Activated CD4-positive, alpha-beta T cell treated with anti-CD3 and anti-CD28 coated beads, Interleukin-2, amount 10 ng/mL, durations not matched to agents 7 days and 5 days (primary cell): ENCODE measurements at regions of chr12 and their contacts with region 1.

Region 1: GRCh38 chr12:110312581-110313360 is 31.7 kb downstream of the ATP2A2 start:
- DNase-seq: no peak
- H3K4me3 Mint-ChIP-seq: no peak overlapping the region
- H3K27ac Mint-ChIP-seq: peak overlapping the region; percentile 74
- H3K4me1 Mint-ChIP-seq: peaks cover 52% of the 10 kb centered on the region
- H3K27me3 Mint-ChIP-seq: no peaks in the 10 kb centered on the region

Region 2: DNA sequence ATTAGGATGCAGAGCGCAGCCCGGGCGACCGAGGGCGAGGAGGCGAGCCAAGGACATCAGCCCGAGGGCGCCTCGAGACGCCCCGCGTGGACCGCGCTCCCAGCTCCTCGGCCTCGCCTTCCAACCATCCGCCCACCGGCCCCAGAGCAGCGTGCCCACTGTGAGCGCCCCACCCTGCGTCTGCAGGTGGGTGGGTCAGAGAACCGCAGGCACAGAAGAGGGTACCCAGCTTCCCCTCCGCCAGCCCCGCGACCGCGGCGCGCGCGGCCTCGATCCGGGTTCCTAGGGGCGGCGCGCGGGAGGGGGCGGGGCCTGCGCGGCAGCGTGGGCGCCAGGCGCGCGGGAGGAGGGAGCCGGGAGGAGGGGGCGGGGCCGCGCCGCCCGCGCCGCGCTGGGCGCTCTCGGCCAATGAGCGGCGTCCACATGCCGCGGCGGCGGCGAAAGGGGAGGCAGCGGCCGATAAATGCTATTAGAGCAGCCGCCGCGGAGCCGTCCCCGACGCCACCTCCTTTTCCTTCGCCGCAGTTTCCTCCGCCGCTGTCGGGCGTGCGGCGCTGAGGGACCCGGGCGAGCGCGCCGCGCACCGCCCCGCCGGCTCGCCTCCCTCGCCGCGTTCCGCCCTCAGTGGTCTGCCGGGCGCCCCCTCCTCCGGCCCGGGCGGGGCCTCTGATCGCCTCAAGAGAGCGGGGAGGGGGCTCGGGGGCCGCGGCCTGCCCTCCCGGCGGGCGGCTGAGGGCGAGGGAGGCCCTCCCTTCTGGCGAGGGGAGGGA is 31.8 kb before region 1 on chr12 and contains the start of gene ATP2A2:
- CTCF ChIA-PET with region 1: no interaction called
- POLR2A ChIA-PET with region 1: no interaction called
- DNase-seq: peak; percentile 90
- H3K4me3 Mint-ChIP-seq: peak within 1 kb of the TSS; percentile 88
- H3K27ac Mint-ChIP-seq: peak within 1 kb of the TSS; percentile 93
- H3K4me1 Mint-ChIP-seq: peaks cover 51% of the 10 kb centered on the region
- H3K27me3 Mint-ChIP-seq: peaks cover 6% of the 10 kb centered on the region
- total RNA-seq, gene ATP2A2: 126 to 131 TPM

Region 3: GRCh38 chr12:110355073-110355472 is 42.3 kb after region 1 on chr12:
- CTCF ChIA-PET with region 1: interaction called, 10 read pairs
- POLR2A ChIA-PET with region 1: no interaction called
- DNase-seq: peak; percentile 42
- H3K4me3 Mint-ChIP-seq: no peak overlapping the region
- H3K27ac Mint-ChIP-seq: no peak overlapping the region
- H3K4me1 Mint-ChIP-seq: peaks cover 26% of the 10 kb centered on the region
- H3K27me3 Mint-ChIP-seq: no peaks in the 10 kb centered on the region

Region 4: DNA sequence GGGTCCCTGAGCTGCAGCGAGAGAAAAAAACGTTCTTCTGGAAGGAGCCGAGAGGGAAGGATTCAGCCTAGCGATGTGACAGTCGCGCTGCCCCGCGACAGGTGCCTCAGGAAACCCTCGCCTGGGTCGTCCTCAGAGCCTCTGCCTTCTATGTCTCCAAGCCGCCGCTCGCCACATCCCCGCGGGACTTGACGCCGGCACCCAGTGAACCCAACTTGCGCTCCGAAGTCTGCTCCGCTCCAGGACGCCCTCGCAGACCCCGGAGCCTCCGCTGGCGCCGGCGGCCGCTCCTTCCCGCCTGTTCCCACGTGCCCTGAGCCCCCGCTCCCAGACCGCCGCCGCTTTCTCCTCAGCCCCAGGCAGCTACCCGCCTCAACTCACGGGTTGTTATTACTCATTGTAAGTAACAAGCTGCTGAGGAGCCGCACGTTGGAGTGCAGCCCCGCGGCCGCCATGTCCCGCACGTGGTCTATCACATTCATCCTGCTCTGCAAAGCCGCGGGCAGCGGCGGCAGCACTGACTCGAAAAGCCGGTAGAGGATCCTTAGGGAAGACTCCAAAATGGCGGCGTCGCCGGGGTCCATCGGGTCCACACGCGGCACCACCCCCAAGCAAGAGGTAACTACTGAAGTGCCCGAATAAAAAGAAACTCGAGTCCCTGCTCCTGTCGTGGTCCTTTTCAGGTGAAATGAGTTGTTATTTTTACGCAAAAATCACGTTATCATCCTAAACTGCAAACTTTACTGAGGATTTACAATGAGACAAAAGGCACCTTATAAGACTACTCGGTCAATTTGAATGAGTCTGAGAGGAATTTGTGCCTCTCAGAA is 90.6 kb after region 1 on chr12 and contains the start of gene ANAPC7:
- CTCF ChIA-PET with region 1: no interaction called
- POLR2A ChIA-PET with region 1: interaction called, 11 read pairs
- DNase-seq: peak; percentile 88
- H3K4me3 Mint-ChIP-seq: peak within 1 kb of the TSS; percentile 100
- H3K27ac Mint-ChIP-seq: peak within 1 kb of the TSS; percentile 100
- H3K4me1 Mint-ChIP-seq: peaks cover 37% of the 10 kb centered on the region
- H3K27me3 Mint-ChIP-seq: no peaks in the 10 kb centered on the region
- total RNA-seq, gene ANAPC7: 61.8 to 67.7 TPM

Region 5: GRCh38 chr12:110475426-110475825 is 162.7 kb after region 1 on chr12:
- CTCF ChIA-PET with region 1: no interaction called
- POLR2A ChIA-PET with region 1: no interaction called
- DNase-seq: no peak
- H3K4me3 Mint-ChIP-seq: no peak overlapping the region
- H3K27ac Mint-ChIP-seq: no peak overlapping the region
- H3K4me1 Mint-ChIP-seq: peaks cover 15% of the 10 kb centered on the region
- H3K27me3 Mint-ChIP-seq: no peaks in the 10 kb centered on the region